Mammary epithelial cell (primary cell): ENCODE measurements at regions of chr16 and their contacts with region 1.

Region 1: GRCh38 chr16:31286421-31287032 is 26.8 kb downstream of the ITGAM start:
- DNase-seq: no peak
- H3K4me3 ChIP-seq: no peak overlapping the region
- H3K27ac ChIP-seq: no peak overlapping the region
- H3K4me1 ChIP-seq: peaks cover 10% of the 10 kb centered on the region
- H3K27me3 ChIP-seq: no peaks in the 10 kb centered on the region
- CTCF ChIP-seq: no peak

Region 2: GRCh38 chr16:31128711-31129567 is 157.6 kb before region 1 on chr16:
- CTCF ChIA-PET with region 1: no interaction called
- dilution Hi-C with region 1: no loop called
- in situ Hi-C with region 1: no loop called
- intact Hi-C with region 1: no loop called
- DNase-seq: no peak
- H3K4me3 ChIP-seq: no peak overlapping the region
- H3K27ac ChIP-seq: no peak overlapping the region
- H3K4me1 ChIP-seq: peaks cover 45% of the 10 kb centered on the region
- H3K27me3 ChIP-seq: no peaks in the 10 kb centered on the region
- CTCF ChIP-seq: no peak

Region 3: GRCh38 chr16:31202414-31203375 is 83.8 kb before region 1 on chr16 and contains the start of gene PYCARD:
- CTCF ChIA-PET with region 1: no interaction called
- dilution Hi-C with region 1: no loop called
- in situ Hi-C with region 1: no loop called
- intact Hi-C with region 1: loop called (anchors 5 kb)
- DNase-seq: peak; percentile 49
- H3K4me3 ChIP-seq: peak within 1 kb of the TSS; percentile 49 to 90 (median 56)
- H3K27ac ChIP-seq: peak within 1 kb of the TSS; percentile 45
- H3K4me1 ChIP-seq: peaks cover 16% of the 10 kb centered on the region
- H3K27me3 ChIP-seq: no peaks in the 10 kb centered on the region
- CTCF ChIP-seq: no peak
- total RNA-seq, gene PYCARD: 30.3 to 38.8 TPM

Region 4: DNA sequence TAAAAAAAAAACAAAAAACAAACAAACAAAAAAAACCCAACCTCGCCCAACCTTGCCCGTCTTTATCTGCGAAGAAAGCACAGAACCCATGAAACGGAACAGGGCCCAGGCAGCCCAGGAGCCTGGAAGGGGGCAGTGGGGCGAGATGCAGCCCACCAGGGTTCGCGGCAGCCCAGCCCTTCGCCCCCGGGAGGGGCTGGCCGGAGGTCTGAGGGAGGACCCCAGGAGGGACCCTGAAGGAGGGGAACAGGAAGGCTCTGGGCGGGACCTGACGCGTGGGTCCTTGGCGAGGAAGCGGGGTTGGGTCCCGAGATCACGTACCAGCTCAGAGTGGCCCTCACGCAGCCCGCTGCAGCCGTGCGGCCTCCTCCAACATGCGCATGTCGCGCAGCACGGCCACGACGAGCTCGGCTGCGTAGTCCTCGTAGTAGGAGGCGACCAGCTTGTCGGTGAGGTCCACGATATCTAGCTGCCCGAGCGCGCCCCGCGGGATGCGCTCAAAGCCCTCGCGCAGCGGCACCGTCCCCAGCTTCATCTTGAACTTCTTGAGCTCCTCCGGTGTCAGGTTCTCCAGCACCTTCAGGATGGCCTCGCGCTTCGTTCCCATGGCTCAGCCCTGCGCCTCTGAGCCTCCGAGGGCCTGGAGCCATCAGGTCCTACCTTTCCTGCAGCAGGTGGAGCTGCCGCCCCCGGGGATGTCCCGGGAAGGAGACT is 69.9 kb before region 1 on chr16 and contains the start of gene PYDC1:
- CTCF ChIA-PET with region 1: no interaction called
- dilution Hi-C with region 1: no loop called
- in situ Hi-C with region 1: no loop called
- intact Hi-C with region 1: no loop called
- DNase-seq: no peak
- H3K4me3 ChIP-seq: peak within 1 kb of the TSS in 1 of 3 experiments; percentile 15
- H3K27ac ChIP-seq: no peak within 1 kb of the TSS
- H3K4me1 ChIP-seq: peaks cover 24% of the 10 kb centered on the region
- H3K27me3 ChIP-seq: peaks cover 15% of the 10 kb centered on the region
- CTCF ChIP-seq: no peak
- total RNA-seq, gene PYDC1: not detected

Region 5: DNA sequence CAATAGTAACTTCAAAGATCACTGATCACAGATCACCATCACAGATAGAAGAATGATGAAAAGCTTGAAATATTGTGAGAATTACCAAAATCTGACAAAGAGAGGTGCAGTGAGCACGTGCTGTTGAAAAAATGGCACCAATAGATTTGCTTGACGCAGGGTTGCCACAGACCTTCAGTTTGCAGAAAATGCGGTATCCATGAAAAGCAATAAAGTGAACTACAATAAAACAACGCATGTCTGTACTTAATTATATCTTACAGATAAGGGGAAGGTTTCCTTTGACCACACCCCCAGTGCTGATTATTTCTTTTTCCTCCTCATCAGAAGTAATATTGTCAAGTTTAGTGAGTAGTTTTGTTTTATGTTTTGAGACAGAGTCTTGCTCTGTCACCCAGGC is 48.5 kb before region 1 on chr16:
- CTCF ChIA-PET with region 1: no interaction called
- dilution Hi-C with region 1: loop called (anchors 5 kb)
- in situ Hi-C with region 1: no loop called
- intact Hi-C with region 1: no loop called
- DNase-seq: no peak
- H3K4me3 ChIP-seq: no peak overlapping the region
- H3K27ac ChIP-seq: no peak overlapping the region
- H3K4me1 ChIP-seq: no peaks in the 10 kb centered on the region
- H3K27me3 ChIP-seq: no peaks in the 10 kb centered on the region
- CTCF ChIP-seq: no peak